Heart left ventricle (tissue), 16 donors: ENCODE measurements at regions of chr1 and their contacts with region 1.

Region 1: DNA sequence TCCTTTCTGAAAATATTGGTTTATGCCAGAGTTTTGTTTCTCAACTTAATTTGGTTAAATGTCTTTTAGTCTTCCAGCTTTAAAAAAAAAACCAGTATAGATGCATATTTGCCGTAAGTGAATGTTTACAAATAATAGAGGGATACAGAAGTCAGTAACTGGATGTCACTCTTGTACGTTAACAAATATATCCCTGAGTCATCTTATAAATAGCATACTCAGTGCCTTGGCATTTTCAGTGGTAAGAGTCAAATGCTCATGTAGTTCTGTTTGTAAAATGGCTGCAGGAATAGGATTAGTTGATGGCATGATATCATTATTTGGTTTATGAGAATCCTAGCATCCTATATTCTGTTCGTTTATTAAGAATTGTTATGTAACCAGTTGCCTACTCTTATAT is 55.4 kb downstream of the SPEN start:
- DNase-seq: no peak
- ATAC-seq: peak in 2 of 4 donors; percentile 62 to 66
- H3K4me3 ChIP-seq: no peak overlapping the region
- H3K27ac ChIP-seq: peak overlapping the region in 7 of 12 donors; percentile 2 to 56 (median 17)
- H3K4me1 ChIP-seq: peaks cover 0 to 47% (median 20%) of the 10 kb centered on the region in 12 donors
- H3K27me3 ChIP-seq: no peaks in the 10 kb centered on the region
- CTCF ChIP-seq: no peak
- POLR2A ChIP-seq: no peak

Region 2: GRCh38 chr1:15810073-15810472 is 92.8 kb before region 1 on chr1:
- intact Hi-C with region 1: loop called in 1 of 10 experiments (anchors 10 kb)
- DNase-seq: no peak
- ATAC-seq: no peak
- H3K4me3 ChIP-seq: no peak overlapping the region
- H3K27ac ChIP-seq: no peak overlapping the region
- H3K4me1 ChIP-seq: peaks cover 0 to 5% (median 0%) of the 10 kb centered on the region in 12 donors
- H3K27me3 ChIP-seq: no peaks in the 10 kb centered on the region
- CTCF ChIP-seq: no peak
- POLR2A ChIP-seq: no peak

Region 3: DNA sequence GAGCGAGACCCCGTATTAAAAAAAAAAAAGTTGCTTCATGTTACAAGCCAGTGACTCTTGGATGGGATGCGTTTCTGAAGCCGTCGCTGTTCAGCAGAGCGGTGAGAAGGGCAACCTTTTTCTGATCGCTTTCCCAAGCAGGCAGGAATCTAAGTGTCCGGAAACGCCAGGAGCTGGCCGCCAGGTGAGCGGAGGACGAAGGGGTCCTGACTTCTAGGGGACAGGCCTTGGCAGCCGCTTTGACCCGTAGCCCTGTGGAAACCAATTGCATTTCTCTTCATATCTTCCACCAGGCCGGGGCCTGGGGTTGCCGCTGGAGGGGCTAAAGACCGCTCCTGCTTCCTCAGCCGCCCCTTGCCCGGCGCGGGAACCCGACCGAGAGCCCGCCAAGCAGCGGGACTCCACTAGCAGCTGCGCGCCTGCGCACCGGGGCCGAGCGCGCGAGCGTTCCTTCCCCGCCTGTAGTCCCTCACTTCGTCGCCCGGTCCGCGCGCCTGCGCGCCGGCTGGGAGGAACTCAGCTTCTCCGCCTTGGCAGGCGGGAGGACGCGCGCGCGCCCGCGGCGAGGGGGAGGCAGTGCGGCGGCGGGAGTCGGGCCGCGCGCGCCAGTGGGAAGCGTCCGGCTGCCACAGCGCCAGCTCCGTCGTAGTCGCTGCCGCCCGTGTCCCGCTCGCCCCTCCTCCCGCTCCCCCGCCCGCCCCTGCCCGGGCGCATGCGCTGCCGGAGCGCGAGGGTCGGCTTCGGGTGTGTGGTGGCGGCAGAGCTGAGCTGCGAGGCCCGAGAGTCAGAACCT is 55.6 kb before region 1 on chr1 and contains the start of gene SPEN:
- intact Hi-C with region 1: loop called in 1 of 10 experiments (anchors 1 kb)
- DNase-seq: peak; percentile 98 to 100 (median 99)
- ATAC-seq: peak; percentile 68 to 96 (median 90)
- H3K4me3 ChIP-seq: peak within 1 kb of the TSS; percentile 49 to 97 (median 82)
- H3K27ac ChIP-seq: peak within 1 kb of the TSS; percentile 86 to 99 (median 95)
- H3K4me1 ChIP-seq: peaks cover 11 to 57% (median 41%) of the 10 kb centered on the region in 12 donors
- H3K27me3 ChIP-seq: no peaks in the 10 kb centered on the region
- CTCF ChIP-seq: peak in 2 of 12 donors; percentile 12 to 17
- POLR2A ChIP-seq: peak; percentile 20 to 88
- total RNA-seq, gene SPEN: 18.3 to 41.5 (median 31.3) TPM